ENCODE measurements at regions of chr12 and their contacts with region 1.

Region 1: GRCh38 chr12:111396726-111397445 is 8.8 kb upstream of the SH2B3 start:
- DNase-seq: peak; percentile 75
- H3K4me3 Mint-ChIP-seq: peak overlapping the region; percentile 65
- H3K27ac Mint-ChIP-seq: no peak overlapping the region
- H3K4me1 Mint-ChIP-seq: peaks cover 10% of the 10 kb centered on the region
- H3K27me3 Mint-ChIP-seq: no peaks in the 10 kb centered on the region
- CTCF ChIP-seq: peak; percentile 98

Region 2: GRCh38 chr12:110966081-110966760 is 430.7 kb before region 1 on chr12:
- CTCF ChIA-PET with region 1: no interaction called
- POLR2A ChIA-PET with region 1: no interaction called
- intact Hi-C with region 1: no loop called
- DNase-seq: no peak
- H3K4me3 Mint-ChIP-seq: no peak overlapping the region
- H3K27ac Mint-ChIP-seq: no peak overlapping the region
- H3K4me1 Mint-ChIP-seq: no peaks in the 10 kb centered on the region
- H3K27me3 Mint-ChIP-seq: peaks cover 47% of the 10 kb centered on the region
- CTCF ChIP-seq: no peak

Region 3: GRCh38 chr12:111330800-111331752 is 65.8 kb before region 1 on chr12:
- CTCF ChIA-PET with region 1: interaction called, 10 read pairs
- POLR2A ChIA-PET with region 1: interaction called, 5 read pairs
- intact Hi-C with region 1: no loop called
- DNase-seq: peak; percentile 65
- H3K4me3 Mint-ChIP-seq: no peak overlapping the region
- H3K27ac Mint-ChIP-seq: no peak overlapping the region
- H3K4me1 Mint-ChIP-seq: peaks cover 7% of the 10 kb centered on the region
- H3K27me3 Mint-ChIP-seq: peaks cover 21% of the 10 kb centered on the region
- CTCF ChIP-seq: peak; percentile 56

Region 4: GRCh38 chr12:111412007-111412829 is 15.3 kb after region 1 on chr12:
- CTCF ChIA-PET with region 1: interaction called, 26 read pairs
- POLR2A ChIA-PET with region 1: interaction called, 4 read pairs
- intact Hi-C with region 1: no loop called
- DNase-seq: no peak
- H3K4me3 Mint-ChIP-seq: no peak overlapping the region
- H3K27ac Mint-ChIP-seq: no peak overlapping the region
- H3K4me1 Mint-ChIP-seq: peaks cover 12% of the 10 kb centered on the region
- H3K27me3 Mint-ChIP-seq: no peaks in the 10 kb centered on the region
- CTCF ChIP-seq: no peak

Region 5: GRCh38 chr12:111444925-111445725 is 48.2 kb after region 1 on chr12:
- CTCF ChIA-PET with region 1: interaction called, 183 read pairs
- POLR2A ChIA-PET with region 1: interaction called, 7 read pairs
- intact Hi-C with region 1: no loop called
- DNase-seq: no peak
- H3K4me3 Mint-ChIP-seq: no peak overlapping the region
- H3K27ac Mint-ChIP-seq: no peak overlapping the region
- H3K4me1 Mint-ChIP-seq: peaks cover 20% of the 10 kb centered on the region
- H3K27me3 Mint-ChIP-seq: no peaks in the 10 kb centered on the region
- CTCF ChIP-seq: no peak

Region 6: GRCh38 chr12:111462210-111462769 is 65.4 kb after region 1 on chr12:
- CTCF ChIA-PET with region 1: interaction called, 183 read pairs
- POLR2A ChIA-PET with region 1: no interaction called
- intact Hi-C with region 1: no loop called
- DNase-seq: no peak
- H3K4me3 Mint-ChIP-seq: no peak overlapping the region
- H3K27ac Mint-ChIP-seq: no peak overlapping the region
- H3K4me1 Mint-ChIP-seq: no peaks in the 10 kb centered on the region
- H3K27me3 Mint-ChIP-seq: no peaks in the 10 kb centered on the region
- CTCF ChIP-seq: no peak

Region 7: DNA sequence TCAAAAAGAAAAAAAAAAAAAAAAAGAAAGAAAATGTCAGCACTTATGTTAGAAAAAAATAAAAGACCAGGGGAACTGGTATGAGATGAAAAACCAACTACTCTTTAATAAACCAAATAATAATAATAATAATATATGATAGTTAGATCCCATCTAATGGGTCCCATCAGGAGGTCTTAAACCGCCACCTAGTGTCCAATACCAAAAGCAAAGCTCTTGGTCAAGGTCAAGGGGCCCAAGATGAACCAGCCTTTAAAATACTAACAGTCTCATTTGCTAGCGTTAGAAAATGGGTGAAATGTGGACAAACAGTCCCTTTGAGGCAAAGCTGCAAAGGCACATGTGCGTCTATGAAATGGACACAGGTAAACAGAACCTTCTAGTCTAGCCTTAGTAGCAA is 276.6 kb after region 1 on chr12:
- CTCF ChIA-PET with region 1: interaction called, 3 read pairs
- POLR2A ChIA-PET with region 1: no interaction called
- intact Hi-C with region 1: loop called (anchors 5 kb)
- DNase-seq: peak; percentile 46
- H3K4me3 Mint-ChIP-seq: no peak overlapping the region
- H3K27ac Mint-ChIP-seq: no peak overlapping the region
- H3K4me1 Mint-ChIP-seq: no peaks in the 10 kb centered on the region
- H3K27me3 Mint-ChIP-seq: no peaks in the 10 kb centered on the region
- CTCF ChIP-seq: peak; percentile 32

Measured in MCF 10A (cell line).